ENCODE measurements at regions of chr7 and their contacts with region 1.

Region 1: DNA sequence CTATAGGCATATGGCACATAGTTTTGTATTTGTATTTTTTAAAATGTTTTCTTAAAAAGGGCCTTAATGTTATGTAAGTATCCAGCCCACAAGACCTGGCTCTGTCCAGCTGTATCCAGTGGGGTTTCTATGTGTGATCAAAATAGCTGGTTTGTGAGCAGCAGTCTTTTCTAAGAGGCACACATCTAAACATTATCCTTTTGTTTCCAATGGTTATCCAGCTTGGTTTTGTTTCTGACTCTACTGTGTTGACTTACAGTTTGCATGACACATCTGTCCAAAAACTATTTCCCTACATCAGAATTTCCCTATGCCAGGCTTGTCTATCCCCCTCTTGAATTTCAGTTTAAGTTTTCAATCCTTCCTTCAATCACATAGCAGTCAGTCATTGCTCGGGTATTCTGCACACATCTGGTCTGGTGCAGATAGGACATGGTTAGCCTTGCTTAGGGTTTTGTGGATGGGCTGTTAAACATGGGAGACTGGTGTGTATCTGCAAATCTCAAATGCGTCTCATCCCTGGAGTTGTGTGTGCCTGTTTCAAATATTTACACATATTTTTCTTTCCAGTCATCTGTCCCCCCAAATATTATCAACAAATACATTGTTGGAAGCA is 104.2 kb downstream of the SAMD9 start:
- DNase-seq: no peak
- ATAC-seq: no peak
- H3K4me3 ChIP-seq: no peak overlapping the region
- H3K27ac ChIP-seq: no peak overlapping the region
- H3K4me1 ChIP-seq: no peaks in the 10 kb centered on the region
- H3K27me3 ChIP-seq: no peaks in the 10 kb centered on the region
- CTCF ChIP-seq: no peak
- EP300 ChIP-seq: no peak
- POLR2A ChIP-seq: no peak
- RAD21 ChIP-seq: no peak

Region 2: GRCh38 chr7:93043385-93043985 is 29.9 kb after region 1 on chr7:
- CTCF ChIA-PET with region 1: no interaction called
- POLR2A ChIA-PET with region 1: no interaction called
- in situ Hi-C with region 1: no loop called
- intact Hi-C with region 1: loop called (anchors 1 kb)
- DNase-seq: no peak
- ATAC-seq: no peak
- H3K4me3 ChIP-seq: no peak overlapping the region
- H3K27ac ChIP-seq: no peak overlapping the region
- H3K4me1 ChIP-seq: peaks cover 21% of the 10 kb centered on the region
- H3K27me3 ChIP-seq: peaks cover 0 to 7% of the 10 kb centered on the region in 2 experiments; a peak in 2 of 5 replicates
- CTCF ChIP-seq: no peak
- EP300 ChIP-seq: no peak
- POLR2A ChIP-seq: no peak
- RAD21 ChIP-seq: no peak

Measured in HepG2 (cell line).